CD14-positive monocyte (primary cell): ENCODE measurements at regions of chr1 and their contacts with region 1.

Region 1: GRCh38 chr1:23539698-23540266 is 8.7 kb upstream of the E2F2 start:
- DNase-seq: peak; percentile 95 to 99 (median 97)
- H3K4me3 ChIP-seq: no peak overlapping the region
- H3K4me3 Mint-ChIP-seq: peak overlapping the region in 1 of 2 donors; percentile 6
- H3K27ac ChIP-seq: peak overlapping the region in 1 of 2 donors; percentile 61
- H3K27ac Mint-ChIP-seq: peak overlapping the region in 6 of 7 donors; percentile 73 to 90 (median 86)
- H3K4me1 ChIP-seq: peaks cover 38 to 50% of the 10 kb centered on the region in 2 donors
- H3K4me1 Mint-ChIP-seq: peaks cover 34% of the 10 kb centered on the region
- H3K27me3 ChIP-seq: no peaks in the 10 kb centered on the region
- H3K27me3 Mint-ChIP-seq: peaks cover 0 to 9% (median 4%) of the 10 kb centered on the region in 3 donors
- CTCF ChIP-seq: peak; percentile 90

Region 2: DNA sequence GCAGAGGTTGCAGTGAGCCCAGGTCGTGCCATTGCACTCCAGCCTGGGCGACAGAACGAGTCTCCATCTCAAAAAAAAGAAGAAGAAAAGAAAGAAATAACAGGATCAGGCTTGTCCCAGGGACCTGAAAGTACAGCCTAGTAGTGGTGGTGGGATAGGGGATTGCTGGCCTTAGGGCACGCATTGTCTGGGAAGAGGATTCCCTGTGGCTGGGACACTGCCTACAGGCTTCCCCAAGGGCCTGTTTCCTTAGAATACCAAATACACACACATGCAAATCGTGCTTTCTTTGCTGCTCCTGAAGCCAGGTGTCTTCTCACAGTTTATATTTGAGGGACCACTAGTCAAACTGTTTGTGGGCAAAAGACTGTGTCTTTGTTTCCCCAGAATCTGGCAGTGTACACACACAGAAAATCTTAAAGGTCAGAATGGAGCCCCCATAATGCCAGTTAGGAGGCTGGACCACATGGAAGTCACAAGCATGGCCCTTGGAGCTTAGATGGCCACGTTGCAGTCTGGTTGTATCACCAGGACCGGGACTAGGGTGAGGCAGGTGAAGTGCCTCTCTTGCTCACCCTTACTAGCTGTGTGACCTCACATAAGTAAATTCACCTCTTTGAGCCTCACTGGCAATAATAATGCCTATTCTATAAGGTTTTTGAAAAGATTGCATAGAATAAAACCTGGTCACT is 43.1 kb before region 1 on chr1:
- intact Hi-C with region 1: loop called (anchors 1 to 2 kb)
- DNase-seq: no peak
- H3K4me3 ChIP-seq: no peak overlapping the region
- H3K4me3 Mint-ChIP-seq: no peak overlapping the region
- H3K27ac ChIP-seq: no peak overlapping the region
- H3K27ac Mint-ChIP-seq: peak overlapping the region in 2 of 7 donors; percentile 87 to 96
- H3K4me1 ChIP-seq: peaks cover 15 to 16% of the 10 kb centered on the region in 2 donors
- H3K4me1 Mint-ChIP-seq: peaks cover 14% of the 10 kb centered on the region
- H3K27me3 ChIP-seq: no peaks in the 10 kb centered on the region
- H3K27me3 Mint-ChIP-seq: peaks cover 3 to 13% (median 13%) of the 10 kb centered on the region in 3 donors
- CTCF ChIP-seq: no peak

Region 3: GRCh38 chr1:23521588-23521987 is 18.2 kb before region 1 on chr1:
- intact Hi-C with region 1: no loop called
- DNase-seq: no peak
- H3K4me3 ChIP-seq: no peak overlapping the region
- H3K4me3 Mint-ChIP-seq: no peak overlapping the region
- H3K27ac ChIP-seq: peak overlapping the region; percentile 43 to 99
- H3K27ac Mint-ChIP-seq: peak overlapping the region in 6 of 7 donors; percentile 90 to 98 (median 94)
- H3K4me1 ChIP-seq: peaks cover 50 to 51% of the 10 kb centered on the region in 2 donors
- H3K4me1 Mint-ChIP-seq: peaks cover 54% of the 10 kb centered on the region
- H3K27me3 ChIP-seq: no peaks in the 10 kb centered on the region
- H3K27me3 Mint-ChIP-seq: no peaks in the 10 kb centered on the region
- CTCF ChIP-seq: no peak